GM18951 (cell line): ENCODE measurements at regions of chr2 and their contacts with region 1.

Region 1: DNA sequence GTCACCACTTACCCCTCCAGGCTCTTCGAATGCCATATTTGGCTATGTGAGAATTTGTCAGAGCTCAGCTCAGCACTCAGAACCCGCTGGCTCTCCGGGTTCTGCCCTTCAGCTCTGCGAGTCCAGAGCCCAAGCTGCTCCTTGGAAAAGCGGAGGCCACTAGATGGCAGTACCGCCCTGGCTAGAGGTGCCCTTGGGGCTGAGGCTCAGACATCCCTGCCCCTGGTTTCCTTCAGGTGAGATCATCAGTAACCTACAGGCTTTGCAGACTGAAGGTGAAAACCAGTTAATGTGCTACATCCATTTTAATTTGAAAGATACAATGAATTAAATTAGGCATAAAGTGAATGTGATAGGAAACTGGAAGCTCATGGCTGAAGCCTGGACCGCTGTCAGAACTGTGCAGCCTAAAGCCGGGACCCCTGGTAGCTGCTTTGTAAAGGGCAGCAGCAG is 285.6 kb downstream of the AGAP1 start:
- POLR2A ChIP-seq: no peak

Region 2: DNA sequence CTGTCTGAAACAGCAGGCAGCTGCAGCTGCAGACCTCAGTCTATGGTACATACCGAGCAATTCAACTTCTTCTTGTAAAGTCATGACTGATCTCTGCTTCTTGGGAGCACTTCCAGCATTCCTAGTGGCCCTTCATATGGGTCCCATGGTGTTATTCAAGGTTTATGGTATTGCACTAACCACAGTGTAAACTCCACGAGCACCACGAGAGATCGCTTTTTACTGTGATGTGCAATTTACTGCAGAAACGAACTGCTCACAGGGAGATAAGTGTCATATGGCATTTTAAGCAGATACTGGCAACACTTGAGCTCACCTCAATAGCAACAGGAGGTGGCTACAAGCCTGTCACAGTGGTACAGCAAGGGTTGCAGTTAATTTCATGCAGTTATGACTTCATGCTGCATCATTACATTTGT is 866.3 kb before region 1 on chr2:
- in situ Hi-C with region 1: no loop called
- POLR2A ChIP-seq: no peak

Region 3: DNA sequence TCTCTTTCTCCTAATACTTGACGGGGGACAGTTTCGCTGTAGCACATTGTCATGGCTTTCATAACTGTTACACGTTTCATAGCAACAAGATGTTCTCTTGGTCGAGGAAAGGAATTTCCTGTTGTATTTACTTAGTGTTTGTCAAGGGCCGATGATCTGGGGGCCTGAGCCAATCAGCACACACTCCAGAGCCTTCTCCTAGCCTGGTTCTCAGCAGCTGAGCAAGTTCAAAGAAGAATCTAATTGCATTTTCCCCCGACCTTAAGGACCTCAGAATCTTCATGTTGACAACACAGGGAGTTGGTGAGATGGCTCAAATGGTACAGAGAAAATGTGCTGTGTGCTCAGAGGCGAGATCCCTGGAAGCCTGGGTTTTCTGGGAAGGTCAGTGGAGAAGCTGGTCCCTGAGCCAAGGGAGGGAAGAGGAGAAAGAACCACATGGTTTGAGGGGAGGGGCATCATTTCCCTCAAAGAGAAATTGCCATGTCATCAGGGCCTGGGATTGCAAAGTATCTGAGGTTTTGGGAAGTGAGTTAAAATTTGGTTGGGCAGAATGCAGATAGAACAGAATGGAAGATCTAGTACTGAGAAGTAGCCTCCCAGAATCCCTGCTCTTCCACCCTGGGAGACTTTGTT is 362.5 kb before region 1 on chr2:
- in situ Hi-C with region 1: no loop called
- POLR2A ChIP-seq: no peak

Region 4: GRCh38 chr2:236171680-236172254 is 392.3 kb after region 1 on chr2:
- in situ Hi-C with region 1: loop called (anchors 5 kb)
- POLR2A ChIP-seq: no peak